ENCODE measurements at regions of chr5 and their contacts with region 1.

Region 1: GRCh38 chr5:923281-923873 is 30.7 kb downstream of the TRIP13 start:
- DNase-seq: no peak
- H3K4me3 ChIP-seq: no peak overlapping the region
- CTCF ChIP-seq: peak; percentile 97

Region 2: GRCh38 chr5:902129-902916 is 21.1 kb before region 1 on chr5:
- CTCF ChIA-PET with region 1: interaction called, 29 read pairs
- POLR2A ChIA-PET with region 1: no interaction called
- DNase-seq: no peak
- H3K4me3 ChIP-seq: no peak overlapping the region
- CTCF ChIP-seq: no peak

Region 3: DNA sequence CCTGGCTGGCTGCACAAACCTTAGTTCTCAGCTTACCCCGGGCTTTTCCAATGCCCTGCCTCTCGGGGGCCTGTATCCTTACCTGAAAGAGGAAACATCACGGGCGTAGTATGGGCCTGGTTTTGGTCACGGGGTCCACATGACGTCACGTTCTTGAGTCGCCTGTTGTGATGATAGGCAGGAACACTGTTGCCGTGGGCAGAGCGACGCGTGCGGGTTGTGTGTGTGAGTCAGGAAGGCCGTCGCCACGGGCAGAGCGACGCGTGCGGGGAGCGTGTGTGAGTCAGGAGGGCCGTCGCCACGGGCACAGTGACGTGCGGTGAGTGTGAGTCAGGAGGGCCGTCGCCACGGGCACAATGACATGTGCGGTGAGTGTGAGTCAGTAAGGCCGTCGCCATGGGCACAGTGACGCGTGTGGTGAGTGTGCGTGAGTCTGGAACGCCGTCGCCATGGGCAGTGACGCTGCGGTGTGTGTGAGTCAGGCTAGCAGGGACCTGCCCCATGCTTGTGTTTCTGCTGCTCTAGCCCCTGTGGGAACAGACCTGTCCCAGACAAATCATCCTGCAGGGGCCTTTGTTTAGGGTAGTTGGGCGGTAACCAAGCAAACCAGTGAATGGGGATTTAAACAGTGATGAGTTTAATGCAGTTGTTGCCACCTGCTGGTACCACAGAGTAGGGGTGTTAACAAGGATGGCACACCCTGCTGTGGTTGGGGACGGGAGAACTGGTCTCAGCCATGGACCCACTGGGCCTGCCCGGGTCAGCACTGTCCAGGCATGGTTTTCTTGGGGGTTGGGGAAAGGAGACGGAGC is 10.9 kb before region 1 on chr5:
- CTCF ChIA-PET with region 1: interaction called, 15 read pairs
- POLR2A ChIA-PET with region 1: no interaction called
- DNase-seq: peak; percentile 56
- H3K4me3 ChIP-seq: no peak overlapping the region
- CTCF ChIP-seq: no peak

Region 4: GRCh38 chr5:1140171-1140817 is 216.9 kb after region 1 on chr5:
- CTCF ChIA-PET with region 1: interaction called, 34 read pairs
- POLR2A ChIA-PET with region 1: no interaction called
- DNase-seq: no peak
- H3K4me3 ChIP-seq: no peak overlapping the region
- CTCF ChIP-seq: peak; percentile 68

Region 5: DNA sequence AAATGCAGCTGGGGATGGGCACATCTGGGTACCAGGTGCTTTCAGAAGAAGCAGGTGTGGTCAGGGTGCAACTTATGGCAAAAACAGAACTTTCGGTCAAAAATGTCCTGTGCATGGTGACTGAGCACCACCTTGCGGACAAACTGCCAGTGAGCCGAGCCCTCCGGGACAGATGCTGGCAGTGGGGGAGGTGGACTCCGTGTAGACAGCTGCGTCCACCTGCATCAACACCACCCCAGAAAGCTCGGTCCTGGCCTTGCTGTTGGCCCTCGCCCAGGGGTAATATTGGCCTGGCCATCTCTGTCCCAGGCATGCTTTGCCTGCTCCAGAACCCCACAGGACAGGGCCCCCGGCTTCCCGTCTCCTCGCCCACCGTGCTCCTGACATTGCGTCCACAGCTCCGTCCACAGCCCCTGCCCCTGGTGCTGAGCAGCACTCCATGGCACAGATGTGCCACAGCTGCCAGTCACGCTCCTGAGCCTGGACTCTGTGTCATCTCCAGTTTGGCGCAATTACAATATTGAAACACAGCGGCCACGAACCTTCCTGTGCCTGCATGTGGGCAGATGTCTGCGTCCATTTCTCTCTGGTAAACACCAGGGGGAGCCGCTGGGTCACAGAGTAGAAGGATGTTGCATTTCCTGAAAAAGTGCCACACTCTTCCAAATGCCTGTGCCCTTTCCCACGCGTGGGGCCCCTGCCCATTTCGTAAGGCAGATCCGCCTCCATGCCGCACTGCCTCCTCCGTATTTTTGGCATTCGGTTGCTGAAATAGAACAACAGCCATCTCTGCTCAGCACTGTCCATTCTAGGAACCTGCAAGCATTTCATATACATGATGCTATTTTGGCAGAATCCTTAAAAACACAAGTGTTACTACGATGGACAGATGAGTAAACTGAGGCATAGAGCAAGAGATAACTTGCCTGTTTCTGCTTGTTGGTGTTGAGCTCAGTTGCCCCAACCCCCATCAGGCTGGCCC is 244.6 kb after region 1 on chr5:
- CTCF ChIA-PET with region 1: interaction called, 52 read pairs
- POLR2A ChIA-PET with region 1: no interaction called
- DNase-seq: no peak
- H3K4me3 ChIP-seq: peak overlapping the region; percentile 12
- CTCF ChIP-seq: peak; percentile 80

Region 6: GRCh38 chr5:1174122-1174936 is 251.0 kb after region 1 on chr5:
- CTCF ChIA-PET with region 1: interaction called, 52 read pairs
- POLR2A ChIA-PET with region 1: no interaction called
- DNase-seq: no peak
- H3K4me3 ChIP-seq: no peak overlapping the region
- CTCF ChIP-seq: peak; percentile 64

Region 7: GRCh38 chr5:1246711-1247431 is 323.5 kb after region 1 on chr5:
- CTCF ChIA-PET with region 1: no interaction called
- POLR2A ChIA-PET with region 1: no interaction called
- DNase-seq: no peak
- H3K4me3 ChIP-seq: no peak overlapping the region
- CTCF ChIP-seq: no peak

Region 8: DNA sequence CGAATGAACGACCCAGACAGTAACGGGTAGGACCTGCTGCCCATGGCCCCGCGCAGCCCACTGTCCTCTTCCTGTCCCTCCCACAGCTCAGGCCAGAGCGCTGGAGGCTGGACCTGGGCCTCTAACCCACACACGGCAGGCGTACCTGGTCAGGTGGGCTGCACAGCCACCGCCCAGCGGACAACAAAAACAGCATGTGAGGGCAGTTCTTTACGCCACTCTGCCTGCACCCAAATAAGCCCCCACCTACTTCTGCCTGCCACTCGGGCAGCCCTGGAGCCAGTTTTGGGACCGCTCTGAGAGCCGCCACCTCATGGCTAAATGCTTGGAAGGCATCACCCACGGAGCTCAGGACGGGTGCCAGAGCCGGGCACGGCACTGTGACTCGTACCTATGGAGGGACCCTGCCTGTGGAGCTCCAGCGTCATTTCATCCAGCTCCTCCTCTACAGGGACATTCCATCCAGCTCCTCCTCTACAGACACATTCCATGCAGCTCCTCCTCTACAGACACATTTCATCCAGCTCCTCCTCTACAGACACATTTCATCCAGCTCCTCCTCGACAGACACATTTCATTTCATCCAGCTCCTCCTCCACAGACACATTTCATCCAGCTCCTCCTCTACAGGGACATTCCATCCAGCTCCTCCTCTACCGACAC is 402.6 kb after region 1 on chr5:
- CTCF ChIA-PET with region 1: no interaction called
- POLR2A ChIA-PET with region 1: no interaction called
- DNase-seq: no peak
- H3K4me3 ChIP-seq: no peak overlapping the region
- CTCF ChIP-seq: no peak

Measured in AG04449 (cell line).